Posterior cingulate gyrus (tissue), 11 donors: ENCODE measurements at regions of chr9 and their contacts with region 1.

Region 1: GRCh38 chr9:17134396-17135294 is at the start of gene CNTLN:
- DNase-seq: peak; percentile 83 to 98 (median 90)

Region 2: GRCh38 chr9:16626577-16627131 is 508.0 kb before region 1 on chr9:
- intact Hi-C with region 1: loop called (anchors 5 kb)
- DNase-seq: no peak

Region 3: GRCh38 chr9:16809912-16810610 is 324.6 kb before region 1 on chr9:
- intact Hi-C with region 1: no loop called
- DNase-seq: no peak

Region 4: DNA sequence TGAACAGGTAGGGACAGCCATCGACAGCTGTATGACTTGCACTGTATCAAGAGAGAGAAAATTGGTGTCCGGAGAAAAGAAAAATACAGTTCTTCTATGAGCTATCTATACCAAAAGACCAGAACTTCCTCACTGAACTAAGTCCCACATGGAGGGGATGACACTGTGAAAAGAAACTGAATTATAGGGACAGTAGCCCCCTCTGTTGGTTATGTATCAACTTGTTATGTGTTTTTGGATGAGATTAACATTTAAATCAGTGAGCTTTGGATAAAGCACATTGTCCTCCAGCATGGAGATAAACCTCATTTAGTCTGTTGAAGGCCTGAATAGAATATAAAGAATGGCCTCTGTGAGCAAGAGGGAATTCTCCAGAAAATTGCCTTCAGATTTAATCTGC is 267.7 kb after region 1 on chr9:
- intact Hi-C with region 1: no loop called
- DNase-seq: no peak